ENCODE measurements at regions of chr3 and their contacts with region 1.

Region 1: GRCh38 chr3:151282921-151283320 is 4.6 kb upstream of the P2RY14 start:
- DNase-seq: peak in 4 of 5 donors; percentile 64 to 71 (median 68)
- H3K4me3 ChIP-seq: no peak overlapping the region
- H3K4me3 Mint-ChIP-seq: no peak overlapping the region
- H3K27ac ChIP-seq: no peak overlapping the region
- H3K27ac Mint-ChIP-seq: peak overlapping the region in 6 of 7 donors; percentile 25 to 90 (median 77)
- H3K4me1 ChIP-seq: peaks cover 27% of the 10 kb centered on the region
- H3K4me1 Mint-ChIP-seq: peaks cover 20 to 36% (median 25%) of the 10 kb centered on the region in 4 donors
- H3K27me3 ChIP-seq: no peaks in the 10 kb centered on the region
- H3K27me3 Mint-ChIP-seq: no peaks in the 10 kb centered on the region

Region 2: GRCh38 chr3:150787741-150788370 is 495.1 kb before region 1 on chr3:
- CTCF ChIA-PET with region 1: interaction called, 3 read pairs
- POLR2A ChIA-PET with region 1: no interaction called
- intact Hi-C with region 1: loop called (anchors 5 kb)
- DNase-seq: peak; percentile 58 to 78 (median 65)
- H3K4me3 ChIP-seq: no peak overlapping the region
- H3K4me3 Mint-ChIP-seq: peak overlapping the region in 4 of 8 donors; percentile 0 to 40 (median 22)
- H3K27ac ChIP-seq: no peak overlapping the region
- H3K27ac Mint-ChIP-seq: peak overlapping the region in 1 of 7 donors; percentile 58
- H3K4me1 ChIP-seq: peaks cover 5% of the 10 kb centered on the region
- H3K4me1 Mint-ChIP-seq: peaks cover 0 to 5% (median 4%) of the 10 kb centered on the region in 4 donors
- H3K27me3 ChIP-seq: no peaks in the 10 kb centered on the region
- H3K27me3 Mint-ChIP-seq: peaks cover 4 to 7% of the 10 kb centered on the region in 2 donors

Region 3: GRCh38 chr3:151156618-151157216 is 126.2 kb before region 1 on chr3:
- CTCF ChIA-PET with region 1: interaction called, 14 read pairs
- POLR2A ChIA-PET with region 1: interaction called, 4 read pairs
- intact Hi-C with region 1: loop called (anchors 1 kb)
- DNase-seq: peak; percentile 42 to 49 (median 45)
- H3K4me3 ChIP-seq: no peak overlapping the region
- H3K4me3 Mint-ChIP-seq: no peak overlapping the region
- H3K27ac ChIP-seq: no peak overlapping the region
- H3K27ac Mint-ChIP-seq: no peak overlapping the region
- H3K4me1 ChIP-seq: no peaks in the 10 kb centered on the region
- H3K4me1 Mint-ChIP-seq: peaks cover 0 to 2% (median 0%) of the 10 kb centered on the region in 4 donors
- H3K27me3 ChIP-seq: no peaks in the 10 kb centered on the region
- H3K27me3 Mint-ChIP-seq: peaks cover 8% of the 10 kb centered on the region in 2 donors

Region 4: DNA sequence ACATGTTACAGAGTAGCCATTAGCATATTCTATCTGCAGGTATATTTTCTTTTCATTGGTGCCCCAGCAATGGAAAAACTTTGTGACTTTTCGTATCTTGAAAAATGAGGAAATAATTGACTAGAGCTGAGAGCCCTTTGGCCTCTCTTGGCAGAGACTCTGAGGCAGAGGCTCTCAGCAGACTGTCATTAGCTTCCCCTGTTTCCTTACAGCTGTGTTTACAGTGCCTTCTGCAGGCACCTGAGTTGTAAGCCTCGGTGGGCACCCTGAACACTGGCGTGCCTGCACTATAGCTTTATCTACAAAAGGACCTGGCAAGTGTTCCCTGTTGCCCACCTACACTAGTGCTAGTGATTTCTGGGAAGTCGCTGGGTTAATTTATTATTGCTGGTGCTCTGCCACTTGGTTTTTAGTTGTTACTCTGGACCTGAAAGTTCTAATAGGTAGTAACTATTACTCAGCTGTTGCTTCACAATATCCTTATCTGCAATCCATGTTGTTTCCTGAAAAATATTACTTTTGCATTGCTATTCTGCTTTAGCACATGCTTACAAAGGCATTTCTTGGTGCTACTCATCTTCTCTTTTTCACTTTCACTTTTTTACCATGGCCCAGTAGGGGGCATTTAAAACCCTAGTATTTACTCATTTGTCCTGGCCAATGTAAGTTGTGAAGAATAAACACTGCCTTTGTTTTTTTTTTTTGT is 72.1 kb before region 1 on chr3:
- CTCF ChIA-PET with region 1: interaction called, 12 read pairs
- POLR2A ChIA-PET with region 1: no interaction called
- intact Hi-C with region 1: no loop called
- DNase-seq: no peak
- H3K4me3 ChIP-seq: no peak overlapping the region
- H3K4me3 Mint-ChIP-seq: peak overlapping the region in 5 of 8 donors; percentile 3 to 35 (median 32)
- H3K27ac ChIP-seq: no peak overlapping the region
- H3K27ac Mint-ChIP-seq: peak overlapping the region; percentile 52 to 97 (median 72)
- H3K4me1 ChIP-seq: peaks cover 44% of the 10 kb centered on the region
- H3K4me1 Mint-ChIP-seq: peaks cover 31 to 55% (median 41%) of the 10 kb centered on the region in 4 donors
- H3K27me3 ChIP-seq: no peaks in the 10 kb centered on the region
- H3K27me3 Mint-ChIP-seq: no peaks in the 10 kb centered on the region

Region 5: GRCh38 chr3:151265866-151266265 is 17.1 kb before region 1 on chr3:
- CTCF ChIA-PET with region 1: interaction called, 13 read pairs
- POLR2A ChIA-PET with region 1: interaction called, 5 read pairs
- intact Hi-C with region 1: no loop called
- DNase-seq: no peak
- H3K4me3 ChIP-seq: no peak overlapping the region
- H3K4me3 Mint-ChIP-seq: no peak overlapping the region
- H3K27ac ChIP-seq: no peak overlapping the region
- H3K27ac Mint-ChIP-seq: no peak overlapping the region
- H3K4me1 ChIP-seq: peaks cover 10% of the 10 kb centered on the region
- H3K4me1 Mint-ChIP-seq: peaks cover 10 to 25% (median 13%) of the 10 kb centered on the region in 4 donors
- H3K27me3 ChIP-seq: no peaks in the 10 kb centered on the region
- H3K27me3 Mint-ChIP-seq: peaks cover 0 to 1% of the 10 kb centered on the region in 2 donors

Region 6: GRCh38 chr3:151918253-151919029 is 635.5 kb after region 1 on chr3:
- CTCF ChIA-PET with region 1: no interaction called
- POLR2A ChIA-PET with region 1: no interaction called
- intact Hi-C with region 1: loop called (anchors 10 kb)
- DNase-seq: peak in 4 of 5 donors; percentile 12 to 28 (median 18)
- H3K4me3 ChIP-seq: no peak overlapping the region
- H3K4me3 Mint-ChIP-seq: no peak overlapping the region
- H3K27ac ChIP-seq: no peak overlapping the region
- H3K27ac Mint-ChIP-seq: no peak overlapping the region
- H3K4me1 ChIP-seq: no peaks in the 10 kb centered on the region
- H3K4me1 Mint-ChIP-seq: no peaks in the 10 kb centered on the region
- H3K27me3 ChIP-seq: no peaks in the 10 kb centered on the region
- H3K27me3 Mint-ChIP-seq: peaks cover 0 to 3% of the 10 kb centered on the region in 2 donors